H1 (cell line): ENCODE measurements at regions of chr3 and their contacts with region 1.

Region 1: DNA sequence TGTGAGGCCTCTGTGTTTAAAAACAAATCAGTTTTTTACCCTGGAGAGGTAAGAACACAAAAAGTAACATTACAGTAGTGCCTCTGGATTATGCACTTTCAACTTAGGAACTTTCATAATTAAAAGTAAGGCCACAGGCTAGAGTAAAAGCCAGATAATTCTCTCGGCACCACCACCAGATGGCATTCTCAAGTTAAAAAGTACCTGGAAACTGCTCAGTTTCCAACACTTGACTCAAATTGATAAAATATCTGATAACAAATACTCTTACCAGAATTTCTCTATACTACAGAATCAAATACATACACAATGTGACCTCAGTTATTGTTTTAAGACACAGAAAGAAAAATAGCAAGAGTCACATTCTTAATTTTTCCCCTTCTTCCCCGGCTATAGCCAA is 19.9 kb downstream of the SPICE1 start:
- DNase-seq: no peak
- H3K4me3 ChIP-seq: no peak overlapping the region
- H3K27ac ChIP-seq: no peak overlapping the region
- H3K4me1 ChIP-seq: no peaks in the 10 kb centered on the region
- H3K27me3 ChIP-seq: no peaks in the 10 kb centered on the region
- CTCF ChIP-seq: peak in 2 of 3 experiments; percentile 33 to 49; a peak in 2 of 4 replicates
- EP300 ChIP-seq: no peak
- POLR2A ChIP-seq: no peak
- RAD21 ChIP-seq: peak; percentile 39 to 53

Region 2: GRCh38 chr3:113339616-113340244 is 155.3 kb before region 1 on chr3:
- CTCF ChIA-PET with region 1: interaction called, 11 read pairs
- POLR2A ChIA-PET with region 1: no interaction called
- DNase-seq: peak in 1 of 2 experiments; percentile 52
- H3K4me3 ChIP-seq: no peak overlapping the region
- H3K27ac ChIP-seq: no peak overlapping the region
- H3K4me1 ChIP-seq: no peaks in the 10 kb centered on the region
- H3K27me3 ChIP-seq: no peaks in the 10 kb centered on the region
- CTCF ChIP-seq: peak in 2 of 3 experiments; percentile 46 to 89; a peak in 3 of 4 replicates
- EP300 ChIP-seq: no peak
- POLR2A ChIP-seq: no peak
- RAD21 ChIP-seq: peak; percentile 52 to 58

Region 3: GRCh38 chr3:113514265-113514769 is 19.3 kb after region 1 on chr3:
- CTCF ChIA-PET with region 1: interaction called, 29 read pairs
- POLR2A ChIA-PET with region 1: interaction called, 5 read pairs
- DNase-seq: no peak
- H3K4me3 ChIP-seq: peak overlapping the region; percentile 86 to 95 (median 93)
- H3K27ac ChIP-seq: no peak overlapping the region; the same call in 1 of the 2 replicates
- H3K4me1 ChIP-seq: no peaks in the 10 kb centered on the region; a peak in 2 of 7 replicates
- H3K27me3 ChIP-seq: peaks cover 0 to 4% (median under 1%) of the 10 kb centered on the region in 4 experiments; a peak in 2 of 7 replicates
- CTCF ChIP-seq: no peak
- EP300 ChIP-seq: no peak
- POLR2A ChIP-seq: no peak
- RAD21 ChIP-seq: no peak

Region 4: DNA sequence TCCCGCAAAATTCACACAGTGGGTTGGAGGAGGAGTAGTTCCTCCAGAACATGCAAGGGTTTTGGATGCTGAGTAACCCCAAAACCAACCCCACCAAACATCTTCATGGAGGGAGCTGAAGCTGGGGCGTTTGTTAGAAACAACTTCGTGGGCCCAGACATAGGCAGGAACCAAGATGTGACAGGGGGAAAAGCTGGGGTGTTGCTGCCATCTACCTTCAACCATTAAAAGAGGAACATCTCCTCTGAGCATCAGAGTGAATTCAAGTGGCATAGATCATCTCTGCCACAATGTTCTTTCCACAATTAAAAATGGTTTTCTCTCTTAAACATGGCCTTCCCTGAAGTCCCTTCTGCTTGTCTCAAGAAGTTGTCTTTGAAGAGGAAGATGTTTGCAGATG is 57.8 kb after region 1 on chr3:
- CTCF ChIA-PET with region 1: interaction called, 13 read pairs
- POLR2A ChIA-PET with region 1: no interaction called
- DNase-seq: no peak
- H3K4me3 ChIP-seq: no peak overlapping the region
- H3K27ac ChIP-seq: no peak overlapping the region
- H3K4me1 ChIP-seq: no peaks in the 10 kb centered on the region
- H3K27me3 ChIP-seq: no peaks in the 10 kb centered on the region
- CTCF ChIP-seq: peak in 2 of 3 experiments; percentile 36 to 40; a peak in 2 of 4 replicates
- EP300 ChIP-seq: no peak
- POLR2A ChIP-seq: no peak
- RAD21 ChIP-seq: peak; percentile 56 to 70

Region 5: DNA sequence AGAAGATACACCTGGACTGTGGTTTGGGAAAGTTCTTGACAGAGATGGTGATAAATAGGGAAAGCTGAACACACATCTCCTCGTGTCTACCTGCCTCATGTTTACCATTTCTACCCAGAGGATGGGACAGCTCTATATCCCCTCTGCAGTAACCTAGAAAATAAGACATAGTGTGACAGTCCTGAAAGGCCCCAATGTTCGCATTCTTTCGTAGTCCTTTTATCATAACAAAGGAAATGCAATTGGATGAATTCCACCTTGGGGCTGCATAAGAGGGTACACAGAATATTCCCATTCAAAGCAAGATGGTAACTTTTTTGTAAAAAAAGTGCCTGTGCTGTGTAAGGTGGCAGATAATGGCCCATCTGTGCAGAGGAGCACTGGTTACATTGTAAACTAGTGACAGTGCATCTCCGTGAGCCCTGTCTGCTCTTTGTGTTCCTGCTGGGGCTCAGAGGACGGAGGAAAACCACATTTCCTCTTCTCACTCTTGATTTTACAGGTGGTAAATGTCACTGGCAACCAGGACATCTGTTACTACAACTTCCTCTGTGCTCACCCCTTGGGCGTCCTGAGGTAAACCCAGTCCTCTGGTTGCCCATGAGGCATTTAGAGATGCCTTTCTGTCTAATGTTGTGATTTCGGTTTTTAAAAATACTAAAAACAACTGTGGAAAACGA is 111.6 kb after region 1 on chr3:
- CTCF ChIA-PET with region 1: interaction called, 11 read pairs
- POLR2A ChIA-PET with region 1: no interaction called
- DNase-seq: no peak
- H3K4me3 ChIP-seq: peak overlapping the region in 1 of 4 experiments; percentile 21; a peak in 1 of 8 replicates
- H3K27ac ChIP-seq: no peak overlapping the region; the same call in 1 of the 2 replicates
- H3K4me1 ChIP-seq: peaks cover 3 to 18% (median 13%) of the 10 kb centered on the region in 4 experiments
- H3K27me3 ChIP-seq: no peaks in the 10 kb centered on the region
- CTCF ChIP-seq: no peak
- EP300 ChIP-seq: no peak
- POLR2A ChIP-seq: no peak
- RAD21 ChIP-seq: no peak

Region 6: DNA sequence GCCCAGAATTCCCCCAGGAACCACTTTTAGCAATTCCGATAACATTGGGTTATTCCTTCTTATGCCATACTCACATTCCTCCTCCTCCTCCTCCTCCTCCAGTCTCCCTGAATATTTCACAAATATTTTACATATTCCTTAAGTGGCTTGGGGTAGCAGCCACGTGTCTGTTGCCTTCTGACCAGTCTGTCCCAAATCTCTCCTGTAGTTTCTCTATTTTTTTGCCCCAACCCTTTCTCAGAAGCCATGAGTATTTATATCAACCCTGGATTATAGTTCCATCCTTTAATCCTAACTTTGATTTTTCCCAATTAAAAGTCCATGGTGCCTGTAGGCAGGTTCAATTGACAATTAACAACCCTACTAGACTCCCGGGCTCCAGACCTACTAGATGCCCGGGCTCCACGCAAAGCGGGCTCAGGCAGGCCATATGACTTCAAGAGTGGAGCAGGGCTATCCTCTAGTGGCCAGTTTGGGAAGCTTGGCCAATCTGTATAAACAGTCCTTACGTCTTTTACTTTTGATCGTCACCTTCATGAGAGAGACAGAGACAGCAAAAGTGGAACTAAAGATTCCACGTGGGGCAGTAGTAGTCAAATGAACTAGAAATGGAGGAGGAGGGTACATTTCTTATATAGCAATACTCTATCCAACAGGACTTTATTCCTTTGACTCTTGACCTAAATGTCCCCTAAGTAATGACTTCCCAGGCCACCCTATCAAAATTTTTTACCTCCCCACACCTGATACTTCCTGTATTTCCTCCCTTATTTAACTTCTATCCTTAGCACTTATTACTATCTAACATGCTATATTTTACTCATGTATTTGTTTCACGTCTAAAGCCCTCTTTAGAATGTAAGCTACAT is 131.7 kb after region 1 on chr3:
- CTCF ChIA-PET with region 1: interaction called, 43 read pairs
- POLR2A ChIA-PET with region 1: no interaction called
- DNase-seq: peak; percentile 34 to 67
- H3K4me3 ChIP-seq: no peak overlapping the region
- H3K27ac ChIP-seq: no peak overlapping the region
- H3K4me1 ChIP-seq: no peaks in the 10 kb centered on the region
- H3K27me3 ChIP-seq: no peaks in the 10 kb centered on the region
- CTCF ChIP-seq: peak; percentile 72 to 99 (median 92)
- EP300 ChIP-seq: no peak
- POLR2A ChIP-seq: no peak
- RAD21 ChIP-seq: peak; percentile 98 to 100